A673 (cell line): ENCODE measurements at regions of chr1 and their contacts with region 1.

Region 1: GRCh38 chr1:118151312-118151937 is 33.6 kb downstream of the SPAG17 start:
- DNase-seq: peak; percentile 65
- H3K4me3 ChIP-seq: no peak overlapping the region
- H3K27ac ChIP-seq: no peak overlapping the region
- H3K4me1 ChIP-seq: no peaks in the 10 kb centered on the region
- H3K27me3 ChIP-seq: no peaks in the 10 kb centered on the region
- CTCF ChIP-seq: peak; percentile 85

Region 2: DNA sequence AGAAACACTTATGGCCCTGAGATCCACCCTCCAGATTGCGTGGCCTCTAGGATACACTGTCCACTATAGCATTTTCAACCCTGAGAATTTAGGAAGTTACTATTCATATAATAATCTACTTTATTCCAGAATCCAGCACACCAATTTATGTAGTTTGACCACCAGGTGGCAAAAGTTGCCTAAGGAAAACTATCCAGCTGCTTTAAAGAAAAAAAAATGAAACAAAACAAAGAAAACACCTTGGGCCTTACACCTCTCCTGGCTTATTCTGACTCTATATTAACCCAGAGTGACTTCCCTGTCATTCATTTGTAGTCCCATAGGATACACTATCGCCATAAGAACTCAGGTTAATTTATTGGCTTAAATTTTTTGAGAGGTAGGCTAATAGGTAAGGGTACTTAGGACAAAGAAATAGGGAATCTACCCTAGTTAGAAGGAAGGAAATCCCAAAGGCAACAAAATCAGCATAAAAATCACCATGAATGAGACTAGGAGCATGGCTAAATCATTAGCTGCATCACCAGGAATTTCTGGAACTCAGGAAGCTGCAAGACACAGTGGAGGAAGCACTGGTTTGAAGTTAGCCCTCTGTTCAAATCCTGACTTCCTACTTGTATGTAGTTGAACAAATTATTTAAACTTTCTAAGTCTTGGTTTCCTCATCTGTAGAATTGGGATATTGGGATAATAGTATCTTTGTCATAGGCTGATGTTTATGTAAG is 73.9 kb before region 1 on chr1:
- CTCF ChIA-PET with region 1: no interaction called
- POLR2A ChIA-PET with region 1: no interaction called
- intact Hi-C with region 1: loop called (anchors 5 kb)
- DNase-seq: peak; percentile 37
- H3K4me3 ChIP-seq: no peak overlapping the region
- H3K27ac ChIP-seq: no peak overlapping the region
- H3K4me1 ChIP-seq: no peaks in the 10 kb centered on the region
- H3K27me3 ChIP-seq: no peaks in the 10 kb centered on the region
- CTCF ChIP-seq: peak; percentile 57

Region 3: DNA sequence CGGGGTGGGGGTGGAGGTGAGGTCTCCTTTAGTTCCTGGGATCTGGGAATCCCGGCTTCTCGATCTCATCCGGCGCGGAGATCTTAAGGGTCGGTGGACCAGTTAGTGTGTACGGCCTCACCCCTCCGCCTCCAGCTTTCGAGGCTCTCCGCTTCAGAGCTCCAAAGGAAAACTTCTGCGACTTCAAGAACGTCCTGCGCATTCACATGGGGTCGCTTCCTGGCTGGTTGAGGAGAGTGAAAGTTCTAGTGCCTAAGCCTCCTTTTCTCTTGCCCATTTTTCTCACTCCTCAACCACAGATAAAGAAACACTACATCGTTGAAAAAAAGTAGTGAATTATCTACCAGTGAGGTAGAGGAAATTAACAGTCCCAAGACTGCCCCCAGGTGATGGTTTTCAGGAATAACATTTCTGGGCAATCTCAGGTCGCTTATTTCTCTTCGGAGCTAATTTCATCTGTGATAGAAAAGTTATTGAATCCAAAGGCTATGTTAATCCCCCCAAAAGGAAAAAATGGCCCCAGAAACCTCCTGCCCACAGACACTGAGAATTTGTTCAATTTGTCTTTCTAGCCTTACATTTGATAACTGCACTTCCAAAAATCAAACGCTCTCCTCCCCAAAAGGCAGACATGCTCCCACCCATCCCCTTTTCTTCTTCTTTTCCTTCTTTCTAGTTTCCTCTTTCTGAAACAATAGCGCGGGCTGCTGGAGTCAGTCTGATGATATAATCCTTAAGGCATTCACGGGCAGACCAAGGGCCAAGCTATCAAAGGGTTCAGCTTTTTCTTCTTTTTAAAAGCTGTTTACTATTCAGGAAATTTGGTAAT is 857.3 kb after region 1 on chr1:
- CTCF ChIA-PET with region 1: interaction called, 6 read pairs
- POLR2A ChIA-PET with region 1: no interaction called
- intact Hi-C with region 1: loop called (anchors 2 kb)
- DNase-seq: peak; percentile 71
- H3K4me3 ChIP-seq: peak overlapping the region; percentile 14
- H3K27ac ChIP-seq: no peak overlapping the region
- H3K4me1 ChIP-seq: no peaks in the 10 kb centered on the region
- H3K27me3 ChIP-seq: peaks cover 36% of the 10 kb centered on the region
- CTCF ChIP-seq: peak; percentile 70

Region 4: GRCh38 chr1:119275145-119276134 is 1124.0 kb after region 1 on chr1:
- CTCF ChIA-PET with region 1: no interaction called
- POLR2A ChIA-PET with region 1: no interaction called
- intact Hi-C with region 1: loop called (anchors 10 kb)
- DNase-seq: peak; percentile 69
- H3K4me3 ChIP-seq: no peak overlapping the region
- H3K27ac ChIP-seq: no peak overlapping the region
- H3K4me1 ChIP-seq: peaks cover 11% of the 10 kb centered on the region
- H3K27me3 ChIP-seq: no peaks in the 10 kb centered on the region
- CTCF ChIP-seq: peak; percentile 96

Region 5: DNA sequence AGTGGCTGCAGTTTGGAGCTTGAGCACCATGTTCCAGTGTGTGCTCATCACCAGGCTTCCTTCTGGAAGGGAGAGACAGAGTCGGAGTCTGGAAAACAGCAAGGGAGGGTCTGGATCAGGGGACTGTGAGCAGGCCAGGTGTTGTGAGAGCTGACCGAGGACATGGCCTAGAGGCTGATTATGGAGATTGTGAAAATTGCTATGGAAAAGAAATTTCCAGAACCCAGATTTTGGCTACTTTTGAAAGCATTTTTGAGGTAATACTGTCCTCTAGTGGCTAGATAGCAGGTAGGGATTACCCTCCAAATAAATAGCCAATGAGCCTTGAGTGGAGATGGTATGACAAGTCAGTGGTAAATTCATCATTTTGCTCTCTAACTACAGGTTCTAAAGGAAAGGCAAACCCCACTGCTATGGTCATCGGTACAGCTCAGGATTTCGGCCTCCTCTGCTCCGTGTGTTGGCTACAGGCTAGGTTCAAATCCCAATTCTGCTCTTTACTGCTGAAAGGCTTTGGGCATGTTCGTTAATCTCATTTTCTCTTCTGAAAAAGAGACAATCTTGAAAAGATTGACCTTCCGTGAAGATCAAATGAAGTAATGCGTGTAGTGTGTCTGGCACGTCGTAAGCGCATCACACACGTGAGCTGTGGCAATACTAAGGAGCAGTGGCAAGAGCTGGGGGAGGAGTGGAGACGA is 1216.2 kb after region 1 on chr1:
- CTCF ChIA-PET with region 1: no interaction called
- POLR2A ChIA-PET with region 1: no interaction called
- intact Hi-C with region 1: loop called (anchors 2 kb)
- DNase-seq: peak; percentile 54
- H3K4me3 ChIP-seq: no peak overlapping the region
- H3K27ac ChIP-seq: no peak overlapping the region
- H3K4me1 ChIP-seq: peaks cover 7% of the 10 kb centered on the region
- H3K27me3 ChIP-seq: peaks cover 3% of the 10 kb centered on the region
- CTCF ChIP-seq: peak; percentile 83